ENCODE measurements at regions of chr5 and their contacts with region 1.

Region 1: GRCh38 chr5:140113699-140114263 is at the start of gene PURA:
- DNase-seq: peak; percentile 94 to 97 (median 97)
- H3K4me3 ChIP-seq: peak within 1 kb of the TSS; percentile 75 to 93 (median 87)
- H3K27ac ChIP-seq: peak within 1 kb of the TSS; percentile 40 to 76
- H3K4me1 ChIP-seq: peaks cover 6 to 57% (median 37%) of the 10 kb centered on the region in 4 experiments
- H3K27me3 ChIP-seq: peaks cover 14 to 40% (median 23%) of the 10 kb centered on the region in 5 experiments

Region 2: GRCh38 chr5:140131967-140132409 is 18.2 kb after region 1 on chr5:
- CTCF ChIA-PET with region 1: interaction called, 12 read pairs
- POLR2A ChIA-PET with region 1: interaction called, 3 read pairs
- DNase-seq: peak in 2 of 3 donors; percentile 69 to 70
- H3K4me3 ChIP-seq: no peak overlapping the region
- H3K27ac ChIP-seq: no peak overlapping the region
- H3K4me1 ChIP-seq: peaks cover 0 to 9% (median 8%) of the 10 kb centered on the region in 4 experiments
- H3K27me3 ChIP-seq: peaks cover 0 to 2% (median 0%) of the 10 kb centered on the region in 5 experiments

Measured in common myeloid progenitor, CD34-positive (primary cell).